BJ (cell line): ENCODE measurements at regions of chr2 and their contacts with region 1.

Region 1: DNA sequence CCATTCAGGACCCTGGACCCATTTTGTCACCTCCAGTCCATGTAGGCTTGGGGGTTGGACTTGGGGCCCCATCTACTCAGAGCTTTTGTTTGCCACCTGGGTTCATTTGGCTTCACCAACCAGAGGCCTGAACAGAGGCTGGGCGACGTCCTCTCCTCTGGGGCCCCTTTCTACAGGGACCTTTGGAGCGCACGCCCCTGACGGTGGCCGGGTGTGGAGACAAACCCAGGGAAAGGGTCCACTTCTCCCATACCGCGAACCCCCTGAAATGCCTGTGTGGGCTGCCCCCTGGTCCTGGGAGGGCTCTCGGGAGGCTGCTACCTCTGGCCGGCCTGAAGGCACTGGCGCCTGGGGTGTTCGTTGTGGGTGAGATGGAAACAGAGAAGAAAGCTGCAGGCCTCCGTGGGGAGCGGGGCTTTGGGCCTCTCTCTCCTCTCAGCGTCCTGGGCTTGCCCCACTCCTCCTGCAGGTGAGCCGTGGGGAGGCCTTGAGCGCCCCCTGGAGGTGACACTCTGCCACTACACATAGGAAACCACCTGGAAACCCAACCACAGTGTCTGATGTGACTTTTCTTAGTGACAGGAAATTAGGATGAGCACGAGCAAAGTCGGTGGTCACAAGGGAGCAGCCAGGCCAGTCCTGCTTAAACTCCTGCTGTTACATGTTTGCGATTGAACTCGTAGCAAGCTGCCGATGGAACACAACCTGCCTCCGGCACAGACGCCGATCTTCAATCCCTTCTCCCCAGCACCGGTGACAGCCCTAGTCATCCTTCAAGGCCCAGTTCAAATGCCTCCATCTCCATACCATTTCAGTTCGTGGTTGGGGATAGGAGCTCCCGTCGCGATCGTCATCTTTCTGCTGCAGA is 12.0 kb upstream of the NTSR2 start:
- DNase-seq: no peak
- H3K4me3 ChIP-seq: no peak overlapping the region
- H3K27me3 ChIP-seq: peaks cover 21% of the 10 kb centered on the region
- CTCF ChIP-seq: peak; percentile 84

Region 2: DNA sequence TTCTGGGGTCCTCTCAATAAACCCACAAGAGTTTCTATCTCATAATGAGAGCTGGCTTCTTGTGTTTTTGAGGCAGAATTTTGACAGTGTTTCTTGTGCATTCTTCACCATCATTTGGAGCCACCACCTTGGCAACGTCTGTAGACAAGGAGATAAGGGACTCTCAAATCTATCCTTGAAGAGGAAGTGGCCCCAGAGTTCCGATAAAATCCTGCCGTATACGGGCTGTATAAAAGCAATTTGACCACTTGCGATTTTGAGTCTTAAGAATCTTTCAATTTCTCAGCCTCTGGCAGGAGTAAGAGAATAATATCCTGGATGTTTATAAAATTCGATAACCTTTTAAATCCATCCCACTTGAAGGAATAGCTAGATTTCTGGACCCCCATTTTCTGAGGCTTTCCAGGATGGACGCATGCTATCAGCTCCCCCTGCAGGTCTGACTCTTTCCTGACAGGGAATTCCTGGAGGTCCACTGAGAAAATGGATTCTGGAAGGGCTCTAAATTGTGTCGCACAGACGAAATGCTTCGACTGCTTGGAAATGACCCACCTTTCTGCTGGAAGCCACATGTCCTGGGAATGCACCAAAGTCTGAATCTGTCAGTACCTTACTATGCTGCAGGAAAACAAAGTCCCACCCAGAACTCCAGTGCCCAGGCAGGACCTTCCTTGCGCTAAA is 270.0 kb before region 1 on chr2:
- CTCF ChIA-PET with region 1: no interaction called
- POLR2A ChIA-PET with region 1: no interaction called
- DNase-seq: no peak
- H3K4me3 ChIP-seq: no peak overlapping the region
- H3K27me3 ChIP-seq: no peaks in the 10 kb centered on the region; the same call in 1 of the 2 replicates
- CTCF ChIP-seq: peak; percentile 84

Region 3: DNA sequence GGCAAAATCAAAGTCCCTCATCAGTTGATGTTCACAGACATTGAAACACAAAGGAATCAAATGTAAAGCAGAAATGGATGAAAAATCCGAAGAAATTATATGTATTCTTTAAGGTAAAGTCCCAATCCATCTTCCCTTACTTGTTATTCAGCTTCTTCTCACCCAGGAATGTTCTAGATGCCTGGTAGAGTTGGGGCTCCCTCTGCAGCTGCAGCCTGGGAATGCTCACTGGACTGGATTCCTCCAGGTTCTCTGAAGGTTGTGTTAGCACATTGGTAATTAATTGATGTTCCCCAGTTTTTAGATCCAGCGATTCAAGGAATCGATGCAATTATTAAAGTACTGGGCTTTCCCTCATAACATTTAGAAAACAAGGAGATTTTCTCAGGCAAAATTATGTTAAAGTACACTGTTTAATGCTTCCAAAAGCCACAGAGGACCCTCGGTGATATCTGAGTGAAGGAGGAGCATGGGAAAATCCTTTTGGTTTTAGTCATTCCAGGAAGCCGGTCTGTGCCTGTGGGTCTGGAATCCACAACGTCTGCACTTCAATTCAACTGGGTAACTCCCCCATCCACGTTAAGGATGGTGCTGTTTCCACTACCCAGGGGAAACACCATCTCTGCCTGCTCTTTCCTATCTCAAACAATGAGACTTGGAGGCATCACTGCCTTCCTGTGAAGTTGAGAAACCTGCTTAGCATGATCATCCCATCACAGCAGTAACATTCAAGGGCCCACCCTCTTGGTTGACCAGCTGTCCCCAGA is 33.9 kb before region 1 on chr2:
- CTCF ChIA-PET with region 1: no interaction called
- POLR2A ChIA-PET with region 1: no interaction called
- DNase-seq: no peak
- H3K4me3 ChIP-seq: no peak overlapping the region
- H3K27me3 ChIP-seq: peaks cover 3% of the 10 kb centered on the region
- CTCF ChIP-seq: 0 out of 2 replicates have a peak, but pooled peaks have one; percentile 24

Region 4: GRCh38 chr2:11669454-11670291 is 12.3 kb before region 1 on chr2 and contains the start of gene NTSR2:
- CTCF ChIA-PET with region 1: interaction called, 11 read pairs
- POLR2A ChIA-PET with region 1: no interaction called
- DNase-seq: no peak
- H3K4me3 ChIP-seq: no peak within 1 kb of the TSS
- H3K27me3 ChIP-seq: peaks cover 10% of the 10 kb centered on the region
- CTCF ChIP-seq: no peak
- polyA plus RNA-seq, gene NTSR2: not detected in 2 replicates

Region 5: GRCh38 chr2:11705063-11705462 is 23.1 kb after region 1 on chr2:
- CTCF ChIA-PET with region 1: no interaction called
- POLR2A ChIA-PET with region 1: no interaction called
- DNase-seq: no peak
- H3K4me3 ChIP-seq: no peak overlapping the region
- H3K27me3 ChIP-seq: no peaks in the 10 kb centered on the region
- CTCF ChIP-seq: no peak